OCI-LY7 (cell line): ENCODE measurements at regions of chr9 and their contacts with region 1.

Region 1: GRCh38 chr9:130866474-130866965 is 30.1 kb downstream of the QRFP start:
- DNase-seq: peak; percentile 63
- H3K4me3 ChIP-seq: no peak overlapping the region
- H3K27ac ChIP-seq: no peak overlapping the region
- H3K4me1 ChIP-seq: peaks cover 12% of the 10 kb centered on the region
- CTCF ChIP-seq: peak; percentile 94

Region 2: DNA sequence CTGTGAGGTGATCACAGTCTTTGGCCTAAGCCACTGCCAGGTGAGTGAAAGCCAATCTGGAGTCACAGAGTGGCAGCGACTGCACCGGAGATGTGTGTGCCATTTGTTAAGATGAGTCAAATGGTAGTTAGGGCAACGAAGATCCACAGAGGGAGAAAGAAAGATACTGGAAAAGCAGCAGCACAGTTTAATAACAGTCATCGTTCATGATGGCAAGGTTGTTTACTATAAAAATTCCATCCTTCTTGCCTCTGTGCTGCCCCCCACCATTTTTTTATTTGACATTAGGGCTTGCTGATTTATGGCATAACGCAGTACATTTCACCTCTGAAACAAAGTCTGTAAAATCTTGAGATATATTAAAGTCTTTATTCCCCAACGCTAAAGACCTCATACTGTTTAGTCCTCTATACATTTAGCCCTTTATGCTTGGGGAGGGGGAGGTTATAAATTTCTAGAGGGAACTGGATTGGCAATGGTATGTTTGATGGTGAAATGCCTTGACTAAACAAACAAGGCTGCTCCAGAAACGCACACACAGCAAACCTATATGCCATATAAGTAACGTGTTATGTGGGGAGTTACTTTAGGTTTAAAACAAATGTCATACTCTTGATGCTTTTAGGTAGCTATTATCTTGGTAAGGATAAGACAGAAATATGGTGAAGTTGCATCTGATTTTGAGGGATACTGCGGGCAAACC is 87.2 kb before region 1 on chr9:
- CTCF ChIA-PET with region 1: no interaction called
- POLR2A ChIA-PET with region 1: no interaction called
- intact Hi-C with region 1: no loop called
- DNase-seq: no peak
- H3K4me3 ChIP-seq: no peak overlapping the region
- H3K27ac ChIP-seq: no peak overlapping the region
- H3K4me1 ChIP-seq: peaks cover 5% of the 10 kb centered on the region
- CTCF ChIP-seq: no peak

Region 3: GRCh38 chr9:130956636-130957450 is 90.3 kb after region 1 on chr9:
- CTCF ChIA-PET with region 1: no interaction called
- POLR2A ChIA-PET with region 1: no interaction called
- intact Hi-C with region 1: no loop called
- DNase-seq: no peak
- H3K4me3 ChIP-seq: no peak overlapping the region
- H3K27ac ChIP-seq: no peak overlapping the region
- H3K4me1 ChIP-seq: no peaks in the 10 kb centered on the region
- CTCF ChIP-seq: no peak

Region 4: DNA sequence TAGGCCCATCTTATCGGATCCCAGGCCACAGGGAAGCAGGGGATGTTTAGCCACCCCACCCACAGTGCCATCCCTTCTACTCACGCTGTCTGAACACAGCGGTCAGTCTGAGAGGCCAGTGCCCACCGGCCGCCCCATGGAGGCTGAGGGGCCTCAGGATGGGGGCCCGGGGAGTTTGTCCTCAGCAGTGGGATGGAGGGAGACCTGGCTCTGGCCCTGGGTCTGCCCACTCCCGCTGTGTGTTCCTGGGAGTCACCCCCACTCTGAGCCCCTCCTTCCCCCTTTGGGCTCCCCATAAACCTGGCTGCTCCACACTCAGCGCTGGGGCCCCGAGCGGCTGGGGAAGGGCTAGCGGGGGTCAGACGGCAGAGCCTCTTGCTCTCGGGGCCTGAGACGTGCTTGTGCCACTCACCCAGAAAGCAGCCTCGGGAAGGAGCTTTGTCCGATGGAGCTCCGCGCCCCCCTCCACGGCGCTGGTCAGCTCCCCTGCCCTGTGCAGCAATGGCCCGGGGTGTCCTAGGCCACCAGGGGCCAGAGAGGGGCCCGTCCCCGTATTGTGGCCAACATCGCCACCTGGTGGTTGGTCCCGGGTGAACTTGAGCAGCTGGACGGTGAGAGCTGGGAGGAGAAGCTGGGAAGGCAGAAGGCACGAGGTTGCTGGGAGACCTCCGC is 131.5 kb after region 1 on chr9:
- CTCF ChIA-PET with region 1: no interaction called
- POLR2A ChIA-PET with region 1: no interaction called
- intact Hi-C with region 1: loop called (anchors 5 kb)
- DNase-seq: peak; percentile 44
- H3K4me3 ChIP-seq: no peak overlapping the region
- H3K27ac ChIP-seq: no peak overlapping the region
- H3K4me1 ChIP-seq: no peaks in the 10 kb centered on the region
- CTCF ChIP-seq: peak; percentile 77